ENCODE measurements at regions of chr11 and their contacts with region 1.

Region 1: GRCh38 chr11:43010042-43010441 is 301.8 kb upstream of the API5 start:
- DNase-seq: no peak
- ATAC-seq: no peak

Region 2: GRCh38 chr11:42951240-42951639 is 58.8 kb before region 1 on chr11:
- intact Hi-C with region 1: loop called (anchors 10 kb)
- DNase-seq: no peak
- ATAC-seq: no peak